Vagina (tissue), 2 donors: ENCODE measurements at regions of chr17 and their contacts with region 1.

Region 1: DNA sequence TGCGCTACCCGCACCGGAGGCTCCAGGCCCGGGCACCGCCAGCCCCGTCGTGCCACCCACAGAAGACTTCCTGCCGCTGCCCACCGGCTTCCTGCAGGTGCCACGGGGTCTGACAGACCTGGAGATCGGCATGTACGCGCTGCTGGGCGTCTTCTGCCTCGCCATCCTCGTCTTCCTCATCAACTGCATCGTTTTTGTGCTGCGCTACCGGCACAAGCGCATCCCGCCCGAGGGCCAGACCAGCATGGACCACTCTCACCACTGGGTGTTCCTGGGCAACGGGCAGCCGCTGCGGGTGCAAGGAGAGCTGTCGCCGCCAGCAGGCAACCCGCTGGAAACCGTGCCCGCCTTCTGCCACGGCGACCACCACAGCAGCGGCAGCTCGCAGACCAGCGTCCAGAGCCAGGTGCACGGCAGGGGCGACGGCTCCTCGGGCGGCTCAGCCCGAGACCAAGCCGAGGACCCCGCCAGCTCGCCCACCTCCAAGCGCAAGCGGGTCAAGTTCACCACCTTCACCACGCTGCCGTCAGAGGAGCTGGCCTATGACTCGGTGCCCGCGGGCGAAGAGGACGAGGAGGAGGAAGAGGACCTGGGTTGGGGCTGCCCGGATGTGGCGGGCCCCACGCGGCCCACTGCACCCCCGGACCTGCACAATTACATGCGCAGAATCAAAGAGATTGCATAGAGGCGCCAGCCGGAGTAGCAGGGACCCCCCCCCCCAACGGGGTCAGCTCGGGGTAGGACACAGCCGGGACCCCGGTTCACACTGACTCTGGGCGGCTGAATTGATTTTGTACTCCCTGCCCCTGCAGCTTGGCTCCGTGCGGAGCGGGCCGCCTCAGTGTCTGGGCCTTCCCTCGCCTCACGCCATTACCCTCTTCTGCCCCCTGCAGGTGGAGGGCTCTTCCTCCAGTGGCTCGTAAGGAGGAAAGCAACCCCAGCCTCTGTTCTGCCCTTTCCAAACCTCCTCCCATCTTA is 58.5 kb downstream of the TMEM132E start:
- DNase-seq: no peak
- H3K4me3 ChIP-seq: peak overlapping the region; percentile 36 to 52
- H3K27ac ChIP-seq: no peak overlapping the region
- H3K4me1 ChIP-seq: peaks cover 7% of the 10 kb centered on the region
- H3K27me3 ChIP-seq: no peaks in the 10 kb centered on the region
- CTCF ChIP-seq: peak; percentile 60 to 72 (median 62)
- POLR2A ChIP-seq: no peak

Region 2: GRCh38 chr17:34542700-34543336 is 95.0 kb before region 1 on chr17:
- intact Hi-C with region 1: loop called (anchors 10 kb)
- DNase-seq: no peak
- H3K4me3 ChIP-seq: no peak overlapping the region
- H3K27ac ChIP-seq: no peak overlapping the region
- H3K4me1 ChIP-seq: no peaks in the 10 kb centered on the region
- H3K27me3 ChIP-seq: no peaks in the 10 kb centered on the region
- CTCF ChIP-seq: peak; percentile 36 to 62 (median 39)
- POLR2A ChIP-seq: no peak

Region 3: GRCh38 chr17:35291802-35292201 is 654.0 kb after region 1 on chr17:
- intact Hi-C with region 1: no loop called
- DNase-seq: no peak
- H3K4me3 ChIP-seq: no peak overlapping the region
- H3K27ac ChIP-seq: no peak overlapping the region
- H3K4me1 ChIP-seq: no peaks in the 10 kb centered on the region
- H3K27me3 ChIP-seq: no peaks in the 10 kb centered on the region
- CTCF ChIP-seq: no peak
- POLR2A ChIP-seq: no peak